GM12878 (cell line): ENCODE measurements at regions of chr11 and their contacts with region 1.

Region 1: GRCh38 chr11:17230867-17231851 is 23.4 kb upstream of the PIK3C2A start:
- DNase-seq: peak; percentile 76
- ATAC-seq: peak; percentile 97
- H3K4me3 ChIP-seq: no peak overlapping the region
- H3K27ac ChIP-seq: no peak overlapping the region
- H3K4me1 ChIP-seq: peaks cover 15% of the 10 kb centered on the region
- H3K27me3 ChIP-seq: no peaks in the 10 kb centered on the region; a peak in 1 of 4 replicates
- CTCF ChIP-seq: no peak
- EP300 ChIP-seq: peak; percentile 49 to 81; a peak in 3 of 4 replicates
- POLR2A ChIP-seq: no peak
- RAD21 ChIP-seq: 0 out of 2 replicates have a peak, but pooled peaks have one; percentile 8

Region 2: GRCh38 chr11:17276236-17277023 is 45.3 kb after region 1 on chr11 and contains the start of gene NUCB2:
- CTCF ChIA-PET with region 1: interaction called, 13 read pairs
- POLR2A ChIA-PET with region 1: interaction called, 3 read pairs
- RAD21 ChIA-PET with region 1: no interaction called
- SMC1A ChIA-PET with region 1: interaction called, 6 read pairs
- in situ Hi-C with region 1: no loop called
- intact Hi-C with region 1: no loop called
- DNase-seq: peak; percentile 66
- ATAC-seq: peak; percentile 99
- H3K4me3 ChIP-seq: peak within 1 kb of the TSS; percentile 82
- H3K27ac ChIP-seq: peak within 1 kb of the TSS; percentile 93
- H3K4me1 ChIP-seq: peaks cover 9% of the 10 kb centered on the region
- H3K27me3 ChIP-seq: peaks cover 0 to 2% of the 10 kb centered on the region in 2 experiments; a peak in 2 of 4 replicates
- CTCF ChIP-seq: 0 out of 6 replicates have a peak, but pooled peaks of 1 of the 3 experiments have one; percentile 1
- EP300 ChIP-seq: no peak; a peak in 1 of 4 replicates
- POLR2A ChIP-seq: peak; percentile 86
- RAD21 ChIP-seq: no peak
- polyA plus RNA-seq, gene NUCB2: 57.5 to 66.4 TPM

Region 3: GRCh38 chr11:17354601-17354991 is 123.4 kb after region 1 on chr11:
- CTCF ChIA-PET with region 1: interaction called, 11 read pairs
- POLR2A ChIA-PET with region 1: no interaction called
- RAD21 ChIA-PET with region 1: interaction called, 5 read pairs
- SMC1A ChIA-PET with region 1: interaction called, 15 read pairs
- in situ Hi-C with region 1: no loop called
- intact Hi-C with region 1: loop called (anchors 2 kb)
- DNase-seq: peak; percentile 25
- ATAC-seq: peak; percentile 81
- H3K4me3 ChIP-seq: no peak overlapping the region
- H3K27ac ChIP-seq: no peak overlapping the region
- H3K4me1 ChIP-seq: peaks cover 12% of the 10 kb centered on the region
- H3K27me3 ChIP-seq: peaks cover 8 to 11% of the 10 kb centered on the region in 2 experiments; a peak in 3 of 4 replicates
- CTCF ChIP-seq: peak; percentile 49 to 65 (median 53)
- EP300 ChIP-seq: no peak
- POLR2A ChIP-seq: no peak
- RAD21 ChIP-seq: peak; percentile 28; the same call in 1 of the 2 replicates

Region 4: DNA sequence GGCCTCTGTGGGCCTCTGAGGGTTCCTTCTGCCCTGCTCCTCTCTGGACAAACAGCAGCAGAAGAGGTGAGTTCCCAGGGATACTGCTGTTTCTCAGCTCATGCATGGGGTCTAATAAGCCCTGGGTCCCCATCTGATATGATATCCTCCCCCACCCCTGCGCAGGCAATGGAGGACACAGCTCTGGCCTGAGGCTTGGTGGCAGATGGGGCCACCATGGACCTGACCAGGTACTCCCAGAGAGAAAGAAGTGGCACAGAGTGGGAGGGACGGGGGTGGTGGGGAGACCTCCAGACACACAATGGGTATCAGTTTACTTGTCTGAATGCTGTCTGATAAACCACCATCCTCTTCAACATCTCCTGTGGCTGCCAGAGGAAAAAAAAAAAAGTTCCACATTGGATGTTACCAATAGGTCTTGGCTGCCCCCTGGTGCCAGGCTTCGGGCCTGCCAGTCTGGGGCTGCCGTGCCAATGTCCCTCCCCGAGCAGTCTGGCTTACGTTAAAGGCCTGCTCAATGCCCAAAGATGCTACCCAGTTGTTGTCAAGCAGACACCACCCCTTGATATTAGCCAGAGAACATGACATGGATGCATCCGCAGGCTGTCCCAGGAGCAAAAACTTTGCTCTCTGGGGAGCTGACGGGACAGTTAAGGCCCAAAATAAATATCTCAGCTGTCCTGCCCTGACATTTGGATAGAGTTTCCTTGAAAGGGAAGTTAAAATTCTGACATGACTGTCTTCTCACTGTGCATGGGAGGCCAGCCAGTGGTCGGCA is 273.4 kb after region 1 on chr11:
- CTCF ChIA-PET with region 1: interaction called, 30 read pairs
- POLR2A ChIA-PET with region 1: no interaction called
- RAD21 ChIA-PET with region 1: interaction called, 6 read pairs
- SMC1A ChIA-PET with region 1: interaction called, 8 read pairs
- in situ Hi-C with region 1: loop called (anchors 5 kb)
- intact Hi-C with region 1: loop called (anchors 1 kb)
- DNase-seq: no peak
- ATAC-seq: peak; percentile 91
- H3K4me3 ChIP-seq: no peak overlapping the region
- H3K27ac ChIP-seq: no peak overlapping the region
- H3K4me1 ChIP-seq: no peaks in the 10 kb centered on the region; the same call in 1 of the 2 replicates
- H3K27me3 ChIP-seq: no peaks in the 10 kb centered on the region; a peak in 2 of 4 replicates
- CTCF ChIP-seq: peak; percentile 79 to 92 (median 85)
- EP300 ChIP-seq: no peak
- POLR2A ChIP-seq: no peak
- RAD21 ChIP-seq: peak; percentile 80